Left ventricle myocardium inferior (tissue), 1 donor: ENCODE measurements at regions of chr1 and their contacts with region 1.

Region 1: GRCh38 chr1:154404984-154405761 is at the start of gene IL6R:
- DNase-seq: peak; percentile 94
- H3K4me3 ChIP-seq: peak within 1 kb of the TSS; percentile 88
- H3K27ac ChIP-seq: peak within 1 kb of the TSS; percentile 98
- H3K4me1 ChIP-seq: peaks cover 59% of the 10 kb centered on the region
- H3K27me3 ChIP-seq: no peaks in the 10 kb centered on the region
- CTCF ChIP-seq: peak; percentile 58
- total RNA-seq, gene IL6R: 10.5 TPM

Region 2: GRCh38 chr1:154352581-154353459 is 52.4 kb before region 1 on chr1:
- intact Hi-C with region 1: loop called (anchors 10 kb)
- DNase-seq: peak; percentile 44
- H3K4me3 ChIP-seq: peak overlapping the region; percentile 65
- H3K27ac ChIP-seq: peak overlapping the region; percentile 60
- H3K4me1 ChIP-seq: peaks cover 25% of the 10 kb centered on the region
- H3K27me3 ChIP-seq: no peaks in the 10 kb centered on the region
- CTCF ChIP-seq: no peak

Region 3: GRCh38 chr1:154463512-154463990 is 58.4 kb after region 1 on chr1:
- intact Hi-C with region 1: loop called (anchors 10 kb)
- DNase-seq: no peak
- H3K4me3 ChIP-seq: no peak overlapping the region
- H3K27ac ChIP-seq: peak overlapping the region; percentile 50
- H3K4me1 ChIP-seq: peaks cover 22% of the 10 kb centered on the region
- H3K27me3 ChIP-seq: no peaks in the 10 kb centered on the region
- CTCF ChIP-seq: no peak